ENCODE measurements at regions of chrX and their contacts with region 1.

Region 1: DNA sequence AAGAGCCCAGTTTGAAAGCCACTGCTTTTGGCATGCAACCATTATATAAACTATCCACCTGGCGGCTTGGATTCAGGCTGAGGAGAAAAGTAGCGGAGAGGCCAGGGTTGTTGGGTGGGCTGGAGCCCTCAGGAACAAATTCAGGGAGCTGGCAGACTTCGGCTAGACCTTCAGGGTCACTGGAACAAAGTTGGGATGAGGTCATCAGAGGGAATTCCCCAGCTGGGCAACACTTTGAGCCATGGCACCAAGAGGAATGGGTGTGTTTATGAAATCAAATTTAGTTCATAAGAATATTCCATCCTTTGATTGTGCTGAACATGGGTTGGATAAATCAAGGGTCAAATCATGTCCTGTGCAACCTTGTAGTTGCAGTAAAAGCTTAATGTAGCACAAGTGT is 22.0 kb downstream of the MTMR1 start:
- DNase-seq: peak; percentile 15
- H3K4me3 Mint-ChIP-seq: no peak overlapping the region
- H3K27ac Mint-ChIP-seq: no peak overlapping the region
- H3K4me1 Mint-ChIP-seq: no peaks in the 10 kb centered on the region
- H3K27me3 Mint-ChIP-seq: peaks cover 19% of the 10 kb centered on the region
- CTCF ChIP-seq: no peak

Region 2: GRCh38 chrX:149903889-149904748 is 811.1 kb before region 1 on chrX:
- CTCF ChIA-PET with region 1: no interaction called
- POLR2A ChIA-PET with region 1: no interaction called
- intact Hi-C with region 1: no loop called
- DNase-seq: peak; percentile 10
- H3K4me3 Mint-ChIP-seq: peak overlapping the region; percentile 24
- H3K27ac Mint-ChIP-seq: no peak overlapping the region
- H3K4me1 Mint-ChIP-seq: no peaks in the 10 kb centered on the region
- H3K27me3 Mint-ChIP-seq: peaks cover 45% of the 10 kb centered on the region
- CTCF ChIP-seq: no peak

Region 3: DNA sequence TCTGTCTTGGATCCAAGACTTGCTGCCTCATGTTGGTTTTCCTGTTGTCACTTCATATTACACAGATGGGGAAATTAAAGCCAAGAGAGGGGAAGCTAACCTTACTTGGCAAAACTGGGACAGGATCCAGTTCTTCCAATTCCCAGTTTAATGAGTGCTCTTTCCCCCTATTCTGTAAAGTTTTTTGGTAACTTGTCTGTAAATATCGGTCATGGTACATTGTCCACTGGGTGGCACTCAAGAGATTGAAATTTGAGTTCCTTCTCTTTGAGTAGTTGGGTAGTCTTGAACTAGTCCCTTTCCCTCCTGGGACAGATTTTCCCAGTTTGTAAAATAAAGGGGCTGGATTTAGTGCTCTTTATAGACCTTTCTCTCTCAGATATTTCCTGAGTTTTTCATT is 764.5 kb before region 1 on chrX:
- CTCF ChIA-PET with region 1: interaction called, 12 read pairs
- POLR2A ChIA-PET with region 1: no interaction called
- intact Hi-C with region 1: no loop called
- DNase-seq: peak; percentile 65
- H3K4me3 Mint-ChIP-seq: no peak overlapping the region
- H3K27ac Mint-ChIP-seq: no peak overlapping the region
- H3K4me1 Mint-ChIP-seq: no peaks in the 10 kb centered on the region
- H3K27me3 Mint-ChIP-seq: peaks cover 16% of the 10 kb centered on the region
- CTCF ChIP-seq: peak; percentile 56

Region 4: GRCh38 chrX:150486011-150486410 is 229.2 kb before region 1 on chrX:
- CTCF ChIA-PET with region 1: interaction called, 4 read pairs
- POLR2A ChIA-PET with region 1: no interaction called
- intact Hi-C with region 1: loop called (anchors 1 kb)
- DNase-seq: peak; percentile 71
- H3K4me3 Mint-ChIP-seq: no peak overlapping the region
- H3K27ac Mint-ChIP-seq: no peak overlapping the region
- H3K4me1 Mint-ChIP-seq: peaks cover 21% of the 10 kb centered on the region
- H3K27me3 Mint-ChIP-seq: no peaks in the 10 kb centered on the region
- CTCF ChIP-seq: peak; percentile 62

Region 5: DNA sequence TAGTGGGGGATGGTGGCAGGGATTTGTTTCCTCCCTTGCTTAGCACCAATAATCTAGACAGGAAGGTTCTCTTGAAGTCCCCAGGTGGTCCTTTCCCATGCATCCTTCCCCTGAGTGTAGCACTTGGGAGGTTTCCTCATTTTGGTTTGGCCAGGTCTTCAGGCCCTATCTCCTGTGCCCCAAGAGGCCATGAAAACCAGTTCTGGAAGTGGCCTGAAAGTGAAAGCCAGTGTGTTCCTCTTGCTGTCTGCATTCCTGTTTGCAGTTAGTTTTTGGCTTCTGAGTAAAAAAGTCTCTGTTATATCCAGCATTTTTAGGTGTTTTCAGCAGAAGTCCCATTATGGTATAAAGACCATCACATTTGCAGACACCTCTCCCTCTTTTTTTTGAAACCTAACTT is 87.2 kb before region 1 on chrX:
- CTCF ChIA-PET with region 1: no interaction called
- POLR2A ChIA-PET with region 1: no interaction called
- intact Hi-C with region 1: no loop called
- DNase-seq: no peak
- H3K4me3 Mint-ChIP-seq: no peak overlapping the region
- H3K27ac Mint-ChIP-seq: no peak overlapping the region
- H3K4me1 Mint-ChIP-seq: no peaks in the 10 kb centered on the region
- H3K27me3 Mint-ChIP-seq: peaks cover 27% of the 10 kb centered on the region
- CTCF ChIP-seq: no peak